IMR-90 (cell line): ENCODE measurements at regions of chr1 and their contacts with region 1.

Region 1: DNA sequence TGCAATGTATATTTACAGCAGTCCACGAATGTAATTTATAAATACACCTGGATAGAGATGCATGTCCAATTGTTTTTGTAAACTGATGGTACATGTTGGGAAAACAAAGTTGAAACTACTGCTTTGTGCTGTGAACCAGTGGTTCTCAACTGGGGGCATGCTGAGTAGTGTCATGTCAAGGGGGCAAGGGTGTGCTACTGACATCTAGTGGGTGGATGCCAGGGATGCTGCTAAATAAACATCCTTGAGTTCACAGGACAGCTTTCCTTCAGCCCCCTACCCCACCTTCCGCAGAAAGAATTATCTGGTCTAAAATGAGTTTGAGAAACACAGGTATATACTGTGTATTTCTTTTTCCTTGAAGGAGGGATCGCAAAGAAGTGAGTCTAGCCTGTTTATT is 95.9 kb downstream of the RASAL2 start:
- DNase-seq: peak; percentile 11
- ATAC-seq: no peak
- H3K4me3 ChIP-seq: no peak overlapping the region
- H3K27ac ChIP-seq: no peak overlapping the region
- H3K4me1 ChIP-seq: peaks cover 2% of the 10 kb centered on the region
- H3K27me3 ChIP-seq: no peaks in the 10 kb centered on the region
- CTCF ChIP-seq: peak; percentile 28; the same call in 1 of the 2 replicates
- POLR2A ChIP-seq: no peak
- RAD21 ChIP-seq: peak; percentile 51

Region 2: GRCh38 chr1:177898003-177898654 is 291.7 kb before region 1 on chr1:
- CTCF ChIA-PET with region 1: no interaction called
- POLR2A ChIA-PET with region 1: no interaction called
- dilution Hi-C with region 1: no loop called
- in situ Hi-C with region 1: no loop called
- intact Hi-C with region 1: no loop called
- DNase-seq: no peak
- ATAC-seq: no peak
- H3K4me3 ChIP-seq: no peak overlapping the region
- H3K27ac ChIP-seq: no peak overlapping the region
- H3K4me1 ChIP-seq: no peaks in the 10 kb centered on the region
- H3K27me3 ChIP-seq: peaks cover 5% of the 10 kb centered on the region
- CTCF ChIP-seq: no peak
- POLR2A ChIP-seq: no peak
- RAD21 ChIP-seq: no peak

Region 3: DNA sequence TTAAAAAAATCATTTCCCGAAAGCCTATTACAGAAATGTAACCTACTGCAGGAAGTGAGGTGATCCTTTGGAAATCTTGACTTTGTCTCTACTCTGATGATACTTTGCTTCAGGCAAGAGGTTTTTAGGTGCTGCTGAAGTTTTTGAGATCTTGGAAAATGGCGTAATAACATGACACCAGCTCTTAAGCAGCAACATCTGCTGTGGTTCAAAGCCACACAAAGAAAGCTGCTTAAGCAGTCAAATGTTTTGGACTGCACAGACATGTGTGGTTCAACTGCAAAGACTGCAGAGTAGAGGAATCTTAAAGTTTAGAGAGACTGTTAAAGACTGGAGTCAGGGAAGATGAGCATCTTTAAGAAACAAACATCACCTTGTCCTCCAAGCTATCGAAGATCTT is 43.1 kb after region 1 on chr1:
- CTCF ChIA-PET with region 1: no interaction called
- POLR2A ChIA-PET with region 1: no interaction called
- dilution Hi-C with region 1: no loop called
- in situ Hi-C with region 1: no loop called
- intact Hi-C with region 1: loop called (anchors 5 kb)
- DNase-seq: peak; percentile 62
- ATAC-seq: peak; percentile 59
- H3K4me3 ChIP-seq: no peak overlapping the region
- H3K27ac ChIP-seq: no peak overlapping the region
- H3K4me1 ChIP-seq: no peaks in the 10 kb centered on the region
- H3K27me3 ChIP-seq: no peaks in the 10 kb centered on the region
- CTCF ChIP-seq: no peak
- POLR2A ChIP-seq: no peak
- RAD21 ChIP-seq: no peak